ENCODE measurements at regions of chr10 and their contacts with region 1.

Region 1: GRCh38 chr10:102917962-102918816 is at the start of gene CNNM2:
- DNase-seq: peak; percentile 99
- H3K4me3 Mint-ChIP-seq: peak within 1 kb of the TSS; percentile 92
- H3K27ac Mint-ChIP-seq: peak within 1 kb of the TSS; percentile 91
- H3K4me1 Mint-ChIP-seq: peaks cover 60% of the 10 kb centered on the region
- H3K27me3 Mint-ChIP-seq: peaks cover 7% of the 10 kb centered on the region
- total RNA-seq, gene CNNM2: 5.5 and 6.6 TPM in 2 replicates

Region 2: DNA sequence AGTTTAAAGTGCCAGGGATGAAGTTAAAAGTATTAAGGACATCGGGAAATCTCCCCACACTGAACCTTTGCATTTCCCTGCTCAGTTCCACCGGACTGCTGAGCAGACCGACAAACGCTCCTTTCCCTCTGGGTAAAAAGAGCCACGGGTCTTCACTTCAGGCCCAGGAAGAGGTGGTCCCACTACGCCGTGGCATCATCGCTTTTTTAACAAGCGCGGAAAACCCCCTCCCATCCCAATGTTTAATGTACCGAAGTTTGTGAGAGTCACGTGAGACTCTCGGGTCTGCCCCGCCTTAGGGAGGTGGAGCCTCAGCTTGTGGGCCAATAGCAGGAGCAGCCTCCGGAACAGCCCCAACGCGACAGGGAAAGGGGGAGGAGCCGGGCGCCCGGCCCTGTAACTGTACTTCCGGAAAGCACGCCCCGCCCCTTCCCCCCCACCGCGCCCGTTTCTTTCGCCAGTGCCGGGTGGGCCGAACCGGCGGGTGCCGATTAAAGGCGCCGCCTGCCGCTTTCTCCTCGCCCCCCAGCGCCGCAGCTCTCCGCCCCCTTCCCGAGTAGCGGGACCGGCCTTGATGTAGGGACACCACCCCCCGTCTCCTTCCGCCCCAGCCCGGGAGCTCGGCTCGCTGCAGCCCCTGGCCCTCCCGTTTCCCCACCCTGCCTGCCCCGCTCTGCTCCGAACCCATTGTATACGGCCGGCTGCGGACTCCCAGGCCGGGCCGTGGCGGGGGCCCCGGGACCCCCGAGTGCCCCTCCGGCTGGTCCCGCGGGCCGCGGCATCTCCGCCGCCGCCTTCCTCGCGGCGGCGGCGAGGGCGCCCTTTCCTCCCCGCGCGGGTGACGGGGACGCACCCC is 276.1 kb before region 1 on chr10:
- intact Hi-C with region 1: loop called (anchors 1 kb)
- DNase-seq: peak; percentile 94
- H3K4me3 Mint-ChIP-seq: peak overlapping the region; percentile 90
- H3K27ac Mint-ChIP-seq: peak overlapping the region; percentile 82
- H3K4me1 Mint-ChIP-seq: peaks cover 19% of the 10 kb centered on the region
- H3K27me3 Mint-ChIP-seq: no peaks in the 10 kb centered on the region

Region 3: GRCh38 chr10:102835007-102835482 is 83.1 kb before region 1 on chr10:
- intact Hi-C with region 1: loop called (anchors 1 kb)
- DNase-seq: peak; percentile 63
- H3K4me3 Mint-ChIP-seq: no peak overlapping the region
- H3K27ac Mint-ChIP-seq: no peak overlapping the region
- H3K4me1 Mint-ChIP-seq: peaks cover 7% of the 10 kb centered on the region
- H3K27me3 Mint-ChIP-seq: peaks cover 12% of the 10 kb centered on the region

Region 4: DNA sequence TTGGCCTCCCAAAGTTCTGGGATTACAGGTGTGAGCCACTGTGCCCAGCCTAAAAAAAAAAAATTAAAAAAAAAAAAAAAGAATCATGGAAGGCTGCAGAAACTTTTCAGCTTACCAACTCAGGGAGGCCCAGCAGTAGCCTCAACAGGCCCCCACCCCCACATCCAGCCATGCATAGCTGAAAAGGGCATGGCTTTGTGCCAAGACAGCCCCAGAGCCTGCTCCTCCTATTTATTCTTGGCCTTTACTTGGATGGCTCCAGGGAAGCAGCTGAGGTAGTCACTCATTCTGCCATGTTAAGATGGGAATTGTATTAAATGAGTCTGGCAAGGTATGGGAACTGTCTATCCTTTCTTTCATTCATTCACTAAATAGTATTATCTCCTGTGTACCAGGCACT is 13.8 kb before region 1 on chr10:
- intact Hi-C with region 1: no loop called
- DNase-seq: no peak
- H3K4me3 Mint-ChIP-seq: no peak overlapping the region
- H3K27ac Mint-ChIP-seq: no peak overlapping the region
- H3K4me1 Mint-ChIP-seq: no peaks in the 10 kb centered on the region
- H3K27me3 Mint-ChIP-seq: peaks cover 2% of the 10 kb centered on the region

Region 5: DNA sequence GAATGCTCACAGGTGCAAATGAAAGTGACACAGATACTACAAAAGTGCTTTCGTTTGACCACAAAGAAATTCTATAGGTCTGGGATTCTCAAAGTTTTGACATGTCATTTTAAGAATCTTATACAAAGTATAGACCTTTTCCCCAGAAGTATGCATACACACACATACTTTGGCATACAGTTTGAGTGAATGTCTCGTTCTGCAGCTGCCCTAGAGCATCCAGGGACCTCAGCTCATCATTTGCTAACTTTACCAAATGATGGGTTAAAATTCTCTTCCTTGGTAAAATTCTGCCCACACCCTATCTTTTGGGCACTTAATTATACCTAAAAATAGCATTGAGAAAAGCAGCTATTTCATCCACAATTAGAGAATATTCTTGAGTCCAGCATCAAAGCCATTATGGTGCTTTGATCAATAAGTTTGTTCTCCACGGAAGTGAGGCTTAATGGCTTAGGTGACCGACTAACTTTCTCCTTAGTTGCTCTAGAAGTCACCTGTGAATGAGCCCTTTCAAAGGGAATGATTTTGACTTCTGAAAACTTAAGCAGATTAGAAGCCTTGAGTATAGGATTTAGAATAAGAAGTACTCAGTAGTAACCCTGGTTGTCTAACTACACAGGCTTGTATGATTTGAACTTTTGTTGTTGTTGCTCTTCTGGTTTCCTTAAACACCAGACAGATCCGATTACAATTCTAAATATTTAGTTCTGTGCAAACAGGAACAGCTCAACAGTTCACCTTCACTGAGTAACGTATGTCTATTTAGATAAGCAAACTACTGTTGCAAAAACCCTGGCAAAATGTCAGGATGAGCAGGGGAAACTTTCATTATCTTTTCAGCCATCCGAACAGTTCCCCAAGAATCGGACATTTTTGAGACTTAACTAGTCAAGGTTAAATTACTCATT is 70.5 kb after region 1 on chr10:
- intact Hi-C with region 1: no loop called
- DNase-seq: no peak
- H3K4me3 Mint-ChIP-seq: no peak overlapping the region
- H3K27ac Mint-ChIP-seq: no peak overlapping the region
- H3K4me1 Mint-ChIP-seq: no peaks in the 10 kb centered on the region
- H3K27me3 Mint-ChIP-seq: peaks cover 5% of the 10 kb centered on the region

Region 6: DNA sequence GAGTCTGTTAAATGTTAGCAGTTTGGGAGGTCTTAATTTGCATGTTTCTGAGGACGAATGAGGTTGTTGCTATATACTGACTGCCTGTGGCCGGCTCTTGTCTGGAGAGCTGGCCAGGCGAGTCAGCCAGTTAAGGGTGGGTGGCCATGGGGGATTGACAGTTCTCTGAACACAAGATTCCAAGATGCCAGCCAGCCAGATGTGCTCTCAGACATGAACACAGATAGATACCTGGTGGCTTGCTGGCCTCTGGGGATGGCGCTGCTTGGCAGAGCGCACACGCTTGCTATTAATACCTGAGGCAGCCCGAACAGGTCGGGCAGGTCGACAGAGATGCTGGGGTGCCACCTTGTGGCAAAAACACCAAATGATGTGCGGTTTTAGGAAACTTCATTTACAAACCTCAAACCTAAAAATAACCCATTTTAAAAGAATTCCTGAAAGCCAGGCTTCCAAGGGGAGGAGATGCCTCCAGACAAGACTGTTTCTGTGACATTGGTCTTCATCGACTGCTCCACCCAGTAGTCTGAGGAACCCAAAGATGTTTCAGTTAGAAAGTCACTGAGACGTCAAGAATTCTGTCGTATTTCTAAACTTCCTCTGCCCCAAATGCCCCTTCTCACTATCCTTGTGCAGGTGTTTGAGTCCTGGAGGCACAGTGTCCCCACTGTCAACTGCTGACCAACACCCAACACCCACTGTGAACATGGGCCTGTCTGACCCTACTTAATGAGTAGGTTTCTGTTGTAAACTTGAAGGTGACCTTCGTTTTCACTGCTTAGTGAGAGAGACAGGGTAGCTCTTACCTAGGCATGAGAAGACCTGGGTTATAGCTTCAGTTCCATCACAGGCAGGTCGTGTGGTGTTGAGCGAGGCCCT is 151.5 kb after region 1 on chr10:
- intact Hi-C with region 1: loop called (anchors 1 kb)
- DNase-seq: peak; percentile 54
- H3K4me3 Mint-ChIP-seq: no peak overlapping the region
- H3K27ac Mint-ChIP-seq: peak overlapping the region; percentile 57
- H3K4me1 Mint-ChIP-seq: peaks cover 23% of the 10 kb centered on the region
- H3K27me3 Mint-ChIP-seq: peaks cover 2% of the 10 kb centered on the region

Region 7: GRCh38 chr10:103333925-103334520 is 415.8 kb after region 1 on chr10:
- intact Hi-C with region 1: loop called (anchors 5 kb)
- DNase-seq: no peak
- H3K4me3 Mint-ChIP-seq: no peak overlapping the region
- H3K27ac Mint-ChIP-seq: no peak overlapping the region
- H3K4me1 Mint-ChIP-seq: no peaks in the 10 kb centered on the region
- H3K27me3 Mint-ChIP-seq: no peaks in the 10 kb centered on the region

Region 8: DNA sequence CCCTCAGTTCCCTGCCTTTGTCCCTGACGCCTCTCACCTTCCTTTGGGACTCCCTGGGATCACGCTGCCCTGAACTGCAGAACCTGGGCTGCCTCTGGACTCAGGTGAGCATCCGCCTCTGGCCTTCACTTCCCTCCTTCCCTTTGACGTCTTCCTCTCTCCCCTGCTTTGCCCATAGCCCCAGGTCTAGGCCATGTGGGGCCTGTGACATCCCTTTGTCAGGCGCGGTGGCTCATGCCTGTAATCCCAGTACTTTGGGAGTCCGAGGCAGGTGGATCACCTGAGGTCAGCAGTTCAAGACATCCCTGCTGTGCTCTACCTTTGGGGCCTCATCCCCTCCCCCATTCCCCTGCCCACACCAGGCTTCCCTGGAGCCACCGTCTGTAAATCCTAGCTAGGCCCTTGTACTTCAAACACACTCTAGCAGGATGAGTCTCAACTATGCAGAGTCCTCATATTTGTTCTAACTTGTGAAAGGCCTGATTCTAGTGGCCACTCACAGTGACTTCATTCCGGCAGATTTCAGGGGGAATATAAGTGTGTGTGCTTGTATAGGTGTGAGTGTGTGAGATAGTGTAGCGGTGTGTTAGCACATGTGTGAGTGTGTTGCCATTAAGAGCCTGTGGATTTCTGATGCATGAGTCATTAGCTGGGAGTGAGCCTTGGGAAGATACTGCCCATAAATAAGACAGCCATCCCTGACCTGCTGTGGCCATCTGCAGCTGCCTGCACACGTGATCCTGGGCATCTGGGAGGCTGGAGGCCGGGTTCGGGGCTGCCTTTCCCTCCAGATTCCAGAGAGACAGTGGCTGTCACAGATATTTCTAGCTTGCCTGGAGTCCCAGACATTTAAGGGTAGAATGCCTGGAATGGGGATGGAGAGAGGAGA is 573.5 kb after region 1 on chr10:
- intact Hi-C with region 1: loop called (anchors 10 kb)
- DNase-seq: no peak
- H3K4me3 Mint-ChIP-seq: peak overlapping the region; percentile 51
- H3K27ac Mint-ChIP-seq: peak overlapping the region; percentile 42
- H3K4me1 Mint-ChIP-seq: peaks cover 33% of the 10 kb centered on the region
- H3K27me3 Mint-ChIP-seq: peaks cover 43% of the 10 kb centered on the region